Caco-2 (cell line): ENCODE measurements at regions of chr1 and their contacts with region 1.

Region 1: GRCh38 chr1:39196244-39197215 is 8.0 kb upstream of the MACF1 start:
- DNase-seq: no peak
- H3K4me3 ChIP-seq: no peak overlapping the region
- H3K4me3 Mint-ChIP-seq: no peak overlapping the region
- H3K27ac Mint-ChIP-seq: no peak overlapping the region
- H3K4me1 ChIP-seq: peaks cover 6% of the 10 kb centered on the region; the same call in 1 of the 2 replicates
- H3K4me1 Mint-ChIP-seq: peaks cover 23% of the 10 kb centered on the region
- H3K27me3 ChIP-seq: no peaks in the 10 kb centered on the region
- H3K27me3 Mint-ChIP-seq: no peaks in the 10 kb centered on the region
- CTCF ChIP-seq: no peak

Region 2: GRCh38 chr1:39098546-39099250 is 97.8 kb before region 1 on chr1:
- CTCF ChIA-PET with region 1: interaction called, 43 read pairs
- POLR2A ChIA-PET with region 1: no interaction called
- intact Hi-C with region 1: loop called (anchors 1 kb)
- DNase-seq: peak; percentile 70
- H3K4me3 ChIP-seq: no peak overlapping the region
- H3K4me3 Mint-ChIP-seq: no peak overlapping the region
- H3K27ac Mint-ChIP-seq: no peak overlapping the region
- H3K4me1 ChIP-seq: peaks cover 4% of the 10 kb centered on the region; the same call in 1 of the 2 replicates
- H3K4me1 Mint-ChIP-seq: peaks cover 5% of the 10 kb centered on the region
- H3K27me3 ChIP-seq: no peaks in the 10 kb centered on the region
- H3K27me3 Mint-ChIP-seq: no peaks in the 10 kb centered on the region
- CTCF ChIP-seq: peak; percentile 42 to 54

Region 3: GRCh38 chr1:39158327-39159086 is 38.0 kb before region 1 on chr1:
- CTCF ChIA-PET with region 1: interaction called, 34 read pairs
- POLR2A ChIA-PET with region 1: interaction called, 8 read pairs
- intact Hi-C with region 1: loop called (anchors 2 kb)
- DNase-seq: peak; percentile 87 to 91
- H3K4me3 ChIP-seq: peak overlapping the region; percentile 60
- H3K4me3 Mint-ChIP-seq: peak overlapping the region; percentile 73
- H3K27ac Mint-ChIP-seq: peak overlapping the region; percentile 80
- H3K4me1 ChIP-seq: peaks cover 4% of the 10 kb centered on the region
- H3K4me1 Mint-ChIP-seq: peaks cover 5% of the 10 kb centered on the region
- H3K27me3 ChIP-seq: no peaks in the 10 kb centered on the region
- H3K27me3 Mint-ChIP-seq: no peaks in the 10 kb centered on the region
- CTCF ChIP-seq: peak in 1 of 2 experiments; percentile 28

Region 4: GRCh38 chr1:39243302-39243701 is 46.8 kb after region 1 on chr1:
- CTCF ChIA-PET with region 1: interaction called, 13 read pairs
- POLR2A ChIA-PET with region 1: no interaction called
- intact Hi-C with region 1: no loop called
- DNase-seq: no peak
- H3K4me3 ChIP-seq: no peak overlapping the region
- H3K4me3 Mint-ChIP-seq: no peak overlapping the region
- H3K27ac Mint-ChIP-seq: no peak overlapping the region
- H3K4me1 ChIP-seq: no peaks in the 10 kb centered on the region
- H3K4me1 Mint-ChIP-seq: peaks cover 7% of the 10 kb centered on the region
- H3K27me3 ChIP-seq: no peaks in the 10 kb centered on the region
- H3K27me3 Mint-ChIP-seq: no peaks in the 10 kb centered on the region
- CTCF ChIP-seq: no peak

Region 5: GRCh38 chr1:39272027-39272797 is 75.7 kb after region 1 on chr1:
- CTCF ChIA-PET with region 1: interaction called, 13 read pairs
- POLR2A ChIA-PET with region 1: no interaction called
- intact Hi-C with region 1: no loop called
- DNase-seq: peak; percentile 29 to 66
- H3K4me3 ChIP-seq: no peak overlapping the region
- H3K4me3 Mint-ChIP-seq: peak overlapping the region; percentile 70
- H3K27ac Mint-ChIP-seq: peak overlapping the region; percentile 77
- H3K4me1 ChIP-seq: peaks cover 85% of the 10 kb centered on the region
- H3K4me1 Mint-ChIP-seq: peaks cover 67% of the 10 kb centered on the region
- H3K27me3 ChIP-seq: no peaks in the 10 kb centered on the region
- H3K27me3 Mint-ChIP-seq: no peaks in the 10 kb centered on the region
- CTCF ChIP-seq: no peak